Brain microvascular endothelial cell (primary cell): ENCODE measurements at regions of chr17 and their contacts with region 1.

Region 1: DNA sequence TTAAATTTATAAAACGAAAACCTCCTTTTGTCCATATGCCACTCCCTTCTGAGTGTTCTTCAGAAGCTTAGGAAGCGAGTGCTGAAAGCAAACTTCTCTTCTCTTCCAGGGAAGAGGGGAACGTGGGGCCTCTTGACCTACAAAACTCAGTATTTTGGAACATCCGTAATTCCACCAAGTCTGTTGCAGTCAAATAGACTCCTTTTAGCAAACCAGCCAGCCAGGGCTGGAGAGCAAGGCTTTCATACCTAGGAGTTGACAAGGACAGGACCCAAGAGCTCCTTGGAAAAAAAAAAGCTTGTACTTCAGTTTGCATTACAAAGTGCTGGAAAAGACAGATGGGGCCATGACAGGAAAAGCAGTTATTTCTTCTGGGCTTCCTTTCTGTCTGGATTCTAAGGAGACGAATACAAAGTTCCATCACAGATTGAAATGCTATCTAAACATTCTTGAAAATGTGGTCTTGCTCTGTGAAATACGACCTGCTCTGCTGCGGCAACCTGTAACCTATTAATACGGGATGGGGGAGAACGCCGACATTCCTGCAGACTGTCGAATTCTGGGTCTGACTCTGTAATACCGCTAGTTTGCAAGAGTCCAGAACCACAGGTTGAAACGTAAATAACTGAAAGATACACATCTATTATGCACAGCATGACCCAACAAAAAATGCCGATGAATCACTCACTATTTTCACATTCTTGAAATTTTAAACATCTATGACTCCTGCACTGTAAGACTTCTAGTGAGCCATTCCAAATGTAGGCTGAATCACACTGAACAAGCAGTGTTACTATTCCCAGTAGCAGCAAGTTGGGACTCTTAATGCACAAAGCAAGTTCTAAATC is 20.6 kb downstream of the VPS53 start:
- DNase-seq: peak; percentile 96
- H3K4me3 ChIP-seq: no peak overlapping the region
- H3K27ac ChIP-seq: peak overlapping the region; percentile 94
- H3K27me3 ChIP-seq: no peaks in the 10 kb centered on the region
- CTCF ChIP-seq: no peak

Region 2: GRCh38 chr17:559551-560431 is 134.2 kb before region 1 on chr17:
- in situ Hi-C with region 1: loop called (anchors 10 kb)
- DNase-seq: peak; percentile 80
- H3K4me3 ChIP-seq: no peak overlapping the region
- H3K27ac ChIP-seq: peak overlapping the region; percentile 83
- H3K27me3 ChIP-seq: no peaks in the 10 kb centered on the region
- CTCF ChIP-seq: no peak

Region 3: GRCh38 chr17:781805-782731 is 88.1 kb after region 1 on chr17 and contains the starts of genes GLOD4 and MRM3:
- in situ Hi-C with region 1: no loop called
- DNase-seq: peak; percentile 88
- H3K4me3 ChIP-seq: peak within 1 kb of the TSS; percentile 99
- H3K27ac ChIP-seq: peak within 1 kb of the TSS; percentile 46
- H3K27me3 ChIP-seq: no peaks in the 10 kb centered on the region
- CTCF ChIP-seq: peak; percentile 6